ENCODE measurements at regions of chr18 and their contacts with region 1.

Region 1: DNA sequence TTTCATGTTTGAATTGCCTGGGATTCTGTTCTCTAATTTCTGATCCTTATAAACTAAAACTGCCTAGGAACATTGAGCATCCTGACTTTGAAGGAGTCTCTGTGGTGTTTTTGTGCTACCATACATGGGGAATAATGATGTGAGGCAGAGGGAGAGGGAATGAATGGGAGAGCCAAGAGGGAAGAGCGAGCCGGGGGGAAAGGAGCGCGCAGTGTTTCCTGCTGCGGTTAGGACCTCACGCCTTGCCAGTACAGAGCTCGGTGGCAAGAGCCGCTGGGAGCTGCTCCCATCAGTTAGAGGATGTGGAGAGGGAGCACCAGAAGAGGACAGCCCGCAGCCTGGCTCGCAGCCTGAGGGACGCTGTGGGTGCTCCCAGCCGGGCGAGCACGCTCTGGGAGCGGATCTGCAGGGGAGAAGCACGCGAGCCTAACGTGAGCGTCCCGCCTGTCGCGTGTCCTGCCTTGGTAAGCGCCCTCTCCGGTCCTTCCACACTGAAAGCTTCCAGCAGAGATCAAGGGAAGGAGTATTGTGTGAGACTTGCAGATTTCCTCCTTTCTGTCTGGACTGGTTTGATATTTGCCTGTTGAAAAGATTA is 114.7 kb downstream of the FAM210A start:
- DNase-seq: peak; percentile 74
- H3K4me3 ChIP-seq: peak overlapping the region; percentile 22 to 46 (median 42)
- H3K27ac ChIP-seq: peak overlapping the region; percentile 63 to 80 (median 72)
- H3K4me1 ChIP-seq: peaks cover 0 to 56% (median 28%) of the 10 kb centered on the region in 4 donors
- H3K27me3 ChIP-seq: no peaks in the 10 kb centered on the region
- CTCF ChIP-seq: no peak
- EP300 ChIP-seq: no peak
- POLR2A ChIP-seq: no peak

Region 2: DNA sequence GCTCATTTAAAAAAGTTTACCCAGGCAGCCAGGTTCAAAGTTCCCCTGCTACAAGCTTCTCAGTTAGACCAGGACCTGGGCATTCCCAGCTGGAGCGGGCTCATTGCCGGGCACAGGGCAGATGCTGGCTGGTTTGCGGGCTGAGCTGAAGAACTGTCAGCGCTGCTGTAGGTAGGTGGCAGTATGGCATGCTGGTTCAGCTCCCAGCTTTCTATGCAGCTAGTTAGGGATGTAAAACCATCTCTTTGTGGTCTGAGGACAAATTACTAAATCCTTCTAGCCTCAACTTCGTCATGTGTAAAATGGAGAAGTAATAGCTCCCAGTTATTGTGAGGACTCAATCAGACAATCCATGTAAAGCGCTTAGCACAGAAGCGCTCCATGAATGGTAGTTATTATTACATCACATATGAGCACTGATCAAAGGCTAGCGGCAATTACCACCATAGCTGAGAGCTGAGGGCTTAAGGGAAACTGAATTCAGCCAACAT is 395.6 kb before region 1 on chr18:
- intact Hi-C with region 1: loop called (anchors 5 kb)
- DNase-seq: peak; percentile 90
- H3K4me3 ChIP-seq: no peak overlapping the region
- H3K27ac ChIP-seq: peak overlapping the region in 3 of 4 donors; percentile 51 to 94 (median 88)
- H3K4me1 ChIP-seq: peaks cover 0 to 37% (median 37%) of the 10 kb centered on the region in 4 donors
- H3K27me3 ChIP-seq: no peaks in the 10 kb centered on the region
- CTCF ChIP-seq: peak; percentile 70 to 79 (median 78)
- EP300 ChIP-seq: no peak
- POLR2A ChIP-seq: no peak

Region 3: DNA sequence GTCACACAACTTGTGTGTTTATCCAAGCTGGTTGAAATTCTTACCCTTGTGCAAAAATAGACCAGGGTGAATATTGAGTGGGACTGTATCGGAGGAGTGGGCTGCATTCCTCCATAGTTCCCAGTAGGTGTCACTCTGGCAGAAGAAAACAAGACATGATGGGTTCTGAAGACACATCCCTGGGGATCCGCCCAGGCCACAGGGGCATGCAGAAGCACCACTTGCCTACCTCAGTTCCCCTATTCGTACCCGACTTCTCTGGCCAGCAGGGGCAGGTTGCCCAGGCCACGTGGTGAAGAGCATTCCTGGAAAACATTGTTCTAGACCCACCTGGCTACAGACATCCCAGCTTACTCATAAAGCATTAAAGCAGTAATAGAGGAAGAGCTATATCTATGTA is 53.6 kb before region 1 on chr18:
- intact Hi-C with region 1: loop called (anchors 5 kb)
- DNase-seq: no peak
- H3K4me3 ChIP-seq: no peak overlapping the region
- H3K27ac ChIP-seq: no peak overlapping the region
- H3K4me1 ChIP-seq: peaks cover 0 to 56% (median 43%) of the 10 kb centered on the region in 4 donors
- H3K27me3 ChIP-seq: no peaks in the 10 kb centered on the region
- CTCF ChIP-seq: peak; percentile 17 to 53 (median 36)
- EP300 ChIP-seq: no peak
- POLR2A ChIP-seq: no peak

Measured in sigmoid colon (tissue), 7 donors.